ENCODE measurements at regions of chr6 and their contacts with region 1.

Region 1: GRCh38 chr6:36985808-36986703 is at the start of gene MTCH1:
- DNase-seq: peak; percentile 86
- H3K4me3 Mint-ChIP-seq: no peak within 1 kb of the TSS
- H3K27ac Mint-ChIP-seq: no peak within 1 kb of the TSS
- H3K4me1 Mint-ChIP-seq: peaks cover 14% of the 10 kb centered on the region
- H3K27me3 Mint-ChIP-seq: no peaks in the 10 kb centered on the region
- CTCF ChIP-seq: no peak
- total RNA-seq, gene MTCH1: 74.9 and 78.2 TPM in 2 replicates

Region 2: GRCh38 chr6:36402481-36402880 is 583.6 kb before region 1 on chr6:
- CTCF ChIA-PET with region 1: no interaction called
- POLR2A ChIA-PET with region 1: no interaction called
- intact Hi-C with region 1: no loop called
- DNase-seq: no peak
- H3K4me3 Mint-ChIP-seq: no peak overlapping the region
- H3K27ac Mint-ChIP-seq: no peak overlapping the region
- H3K4me1 Mint-ChIP-seq: no peaks in the 10 kb centered on the region
- H3K27me3 Mint-ChIP-seq: peaks cover 11% of the 10 kb centered on the region
- CTCF ChIP-seq: no peak

Region 3: GRCh38 chr6:36885461-36886401 is 100.3 kb before region 1 on chr6 and contains the start of gene C6orf89:
- CTCF ChIA-PET with region 1: interaction called, 7 read pairs
- POLR2A ChIA-PET with region 1: interaction called, 21 read pairs
- intact Hi-C with region 1: loop called (anchors 1 kb)
- DNase-seq: peak; percentile 99
- H3K4me3 Mint-ChIP-seq: peak within 1 kb of the TSS; percentile 80
- H3K27ac Mint-ChIP-seq: peak within 1 kb of the TSS; percentile 88
- H3K4me1 Mint-ChIP-seq: peaks cover 16% of the 10 kb centered on the region
- H3K27me3 Mint-ChIP-seq: no peaks in the 10 kb centered on the region
- CTCF ChIP-seq: peak; percentile 63
- total RNA-seq, gene C6orf89: 36.9 and 43.1 TPM in 2 replicates

Region 4: DNA sequence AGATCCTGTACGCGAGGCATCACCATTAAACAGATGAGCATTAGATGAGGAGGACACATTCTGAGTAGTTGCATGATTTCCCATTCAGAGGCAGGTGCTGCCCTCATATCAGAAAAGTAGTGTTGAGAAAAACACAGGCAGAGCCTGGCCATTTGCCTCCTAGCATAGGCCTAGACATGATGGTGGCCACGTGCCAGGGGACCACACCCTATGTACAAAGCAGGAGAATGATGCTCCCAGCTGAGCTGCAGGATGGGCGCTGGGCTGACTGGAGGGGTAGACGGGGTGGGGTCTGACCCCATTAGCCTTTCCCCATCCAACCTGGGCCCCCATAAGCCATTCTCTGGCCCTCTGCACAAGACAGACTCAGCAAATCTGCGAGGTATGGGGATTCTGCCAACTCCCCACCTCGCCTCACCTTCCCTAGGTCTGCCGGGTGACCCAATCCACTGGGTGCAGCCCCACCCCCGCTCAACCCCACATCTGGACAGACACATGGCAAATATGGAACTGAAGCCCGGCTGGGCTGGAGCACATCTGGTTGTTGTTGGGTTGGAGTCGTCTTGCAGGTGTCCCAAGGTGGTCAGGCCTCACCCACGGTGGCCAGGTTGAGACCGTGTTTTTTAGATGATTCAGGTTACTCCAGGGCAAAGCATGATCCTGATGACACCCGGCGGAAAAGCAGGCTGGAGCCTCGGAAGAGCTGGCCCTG is 17.6 kb before region 1 on chr6:
- CTCF ChIA-PET with region 1: interaction called, 3 read pairs
- POLR2A ChIA-PET with region 1: interaction called, 19 read pairs
- intact Hi-C with region 1: no loop called
- DNase-seq: peak; percentile 74
- H3K4me3 Mint-ChIP-seq: no peak overlapping the region
- H3K27ac Mint-ChIP-seq: no peak overlapping the region
- H3K4me1 Mint-ChIP-seq: peaks cover 26% of the 10 kb centered on the region
- H3K27me3 Mint-ChIP-seq: no peaks in the 10 kb centered on the region
- CTCF ChIP-seq: no peak

Measured in MCF 10A (cell line).